ENCODE measurements at regions of chr17 and their contacts with region 1.

Region 1: DNA sequence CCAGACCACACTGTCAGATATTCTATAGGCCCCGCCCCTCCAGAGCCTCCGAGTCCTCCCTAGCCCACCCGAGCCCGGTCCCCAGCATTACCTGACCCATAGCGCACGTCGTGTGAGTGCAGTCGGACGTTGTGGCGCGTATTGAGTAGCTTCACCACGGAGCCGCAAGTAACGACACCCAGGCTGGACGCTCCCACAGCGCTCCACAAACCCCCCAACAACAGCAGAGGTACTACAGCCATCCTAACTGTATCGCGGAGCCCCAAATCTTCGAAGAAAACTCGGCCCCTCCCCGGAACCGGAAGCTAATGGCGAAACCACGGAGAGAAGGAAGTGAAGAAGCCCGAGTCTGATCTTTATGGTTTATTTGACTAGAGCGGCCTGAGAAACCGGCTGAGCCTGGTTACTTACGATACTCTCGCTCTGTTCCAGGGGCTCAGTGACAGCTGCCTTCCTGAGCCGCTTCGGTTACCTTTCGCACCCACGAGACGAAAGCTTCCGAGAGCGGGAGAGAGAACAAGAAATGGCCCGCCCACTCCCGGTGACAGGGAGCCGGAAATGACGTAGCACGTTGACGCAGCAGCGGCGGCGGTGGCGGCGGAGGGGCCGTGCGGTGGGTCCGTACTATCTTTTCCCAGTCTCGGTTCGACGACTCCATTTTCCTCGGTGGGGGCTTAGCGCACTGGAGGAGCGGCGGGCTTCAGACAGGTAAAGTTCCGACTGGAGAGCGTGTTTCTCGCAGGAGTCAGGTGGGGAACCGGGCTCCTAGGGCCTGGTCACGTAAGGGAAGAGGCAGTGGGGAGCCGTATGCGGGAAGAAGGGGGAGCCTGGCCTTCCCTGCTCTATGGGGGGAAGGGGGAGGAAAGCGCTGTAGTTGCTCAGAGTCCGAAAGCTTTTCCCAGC is at the starts of genes SDF2 and SUPT6H:
- DNase-seq: peak; percentile 91
- H3K4me3 Mint-ChIP-seq: peak within 1 kb of the TSS; percentile 99
- H3K27ac Mint-ChIP-seq: peak within 1 kb of the TSS; percentile 99
- H3K4me1 Mint-ChIP-seq: peaks cover 34% of the 10 kb centered on the region
- H3K27me3 Mint-ChIP-seq: no peaks in the 10 kb centered on the region
- total RNA-seq, gene SDF2: 40.3 and 49.2 TPM in 2 replicates
- total RNA-seq, gene SUPT6H: 97.5 and 102 TPM in 2 replicates

Region 2: GRCh38 chr17:28585851-28586250 is 76.0 kb before region 1 on chr17:
- intact Hi-C with region 1: no loop called
- DNase-seq: no peak
- H3K4me3 Mint-ChIP-seq: no peak overlapping the region
- H3K27ac Mint-ChIP-seq: no peak overlapping the region
- H3K4me1 Mint-ChIP-seq: peaks cover 1% of the 10 kb centered on the region
- H3K27me3 Mint-ChIP-seq: no peaks in the 10 kb centered on the region

Region 3: DNA sequence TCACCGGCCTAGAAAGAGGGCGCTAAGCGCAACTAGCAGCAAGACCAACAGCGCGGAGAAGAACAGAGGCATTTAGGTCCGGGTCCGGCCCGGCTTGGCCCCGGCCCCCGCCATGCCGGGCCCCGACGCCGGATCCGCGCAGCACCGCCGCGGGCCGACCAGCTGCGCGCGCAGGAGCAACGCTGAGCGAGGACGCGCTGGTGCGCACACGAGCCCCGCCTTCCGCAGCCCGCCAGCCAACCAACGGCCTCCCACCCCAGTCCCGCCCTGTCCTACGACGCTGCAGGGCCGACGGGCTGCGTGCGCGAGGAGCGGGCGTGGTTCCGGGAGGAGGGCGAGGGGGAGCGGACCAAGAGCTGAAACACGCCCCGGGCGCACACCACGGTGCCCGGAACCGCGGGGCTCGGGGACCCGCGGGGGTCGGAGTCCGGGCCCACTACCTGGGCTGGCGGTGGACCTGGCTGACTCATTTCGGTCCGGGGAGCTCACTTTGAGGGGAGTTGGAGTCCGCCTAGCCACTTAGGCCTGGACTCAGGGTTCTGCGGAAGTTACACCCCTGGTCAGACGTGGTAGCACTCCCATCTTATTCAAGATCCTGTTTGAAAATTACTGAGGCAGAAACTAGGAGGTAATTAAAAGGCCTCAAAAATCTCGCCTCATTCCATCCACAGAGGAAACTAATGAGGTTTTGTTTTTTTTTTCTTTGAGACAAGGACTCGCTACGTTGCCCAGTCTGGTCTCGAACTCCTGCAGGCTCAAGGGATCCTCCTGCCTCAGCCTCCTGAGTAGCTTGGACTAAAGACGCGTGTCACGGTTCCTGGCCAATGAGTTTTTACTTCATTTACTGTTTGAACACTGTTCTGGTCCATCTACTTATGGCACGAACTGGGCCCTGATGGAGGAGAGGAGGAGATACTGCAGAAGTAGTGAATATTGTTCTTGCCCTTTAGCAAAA is 16.6 kb before region 1 on chr17 and contains the start of gene BLTP2:
- intact Hi-C with region 1: loop called (anchors 1 kb)
- DNase-seq: peak; percentile 94
- H3K4me3 Mint-ChIP-seq: peak within 1 kb of the TSS; percentile 94
- H3K27ac Mint-ChIP-seq: peak within 1 kb of the TSS; percentile 86
- H3K4me1 Mint-ChIP-seq: peaks cover 35% of the 10 kb centered on the region
- H3K27me3 Mint-ChIP-seq: no peaks in the 10 kb centered on the region
- total RNA-seq, gene BLTP2: 196 and 213 TPM in 2 replicates

Region 4: DNA sequence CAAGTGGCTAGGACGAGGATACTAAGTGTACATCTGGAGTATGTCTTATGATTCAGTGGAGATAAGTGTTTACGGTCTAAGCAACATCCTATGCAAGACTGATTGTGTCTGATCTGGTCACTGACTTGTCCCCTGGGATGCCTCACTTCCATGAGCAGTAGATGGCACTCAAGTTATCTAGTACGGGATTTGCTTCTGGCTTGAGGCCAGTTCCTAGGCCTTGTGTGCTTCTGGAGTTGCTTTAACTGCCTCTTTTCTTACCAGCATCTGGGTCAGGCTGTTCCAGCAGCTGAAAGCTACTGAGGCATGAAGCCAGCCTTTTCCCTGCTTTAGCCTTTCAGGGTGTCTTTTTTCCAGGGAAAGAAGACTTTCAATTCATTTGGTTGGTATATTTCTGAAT is 23.1 kb after region 1 on chr17:
- intact Hi-C with region 1: no loop called
- DNase-seq: no peak
- H3K4me3 Mint-ChIP-seq: no peak overlapping the region
- H3K27ac Mint-ChIP-seq: no peak overlapping the region
- H3K4me1 Mint-ChIP-seq: no peaks in the 10 kb centered on the region
- H3K27me3 Mint-ChIP-seq: no peaks in the 10 kb centered on the region

Region 5: GRCh38 chr17:28710861-28711722 is 49.2 kb after region 1 on chr17:
- intact Hi-C with region 1: loop called (anchors 5 kb)
- DNase-seq: peak; percentile 92
- H3K4me3 Mint-ChIP-seq: peak overlapping the region; percentile 88
- H3K27ac Mint-ChIP-seq: peak overlapping the region; percentile 96
- H3K4me1 Mint-ChIP-seq: peaks cover 7% of the 10 kb centered on the region
- H3K27me3 Mint-ChIP-seq: peaks cover 4% of the 10 kb centered on the region

Region 6: DNA sequence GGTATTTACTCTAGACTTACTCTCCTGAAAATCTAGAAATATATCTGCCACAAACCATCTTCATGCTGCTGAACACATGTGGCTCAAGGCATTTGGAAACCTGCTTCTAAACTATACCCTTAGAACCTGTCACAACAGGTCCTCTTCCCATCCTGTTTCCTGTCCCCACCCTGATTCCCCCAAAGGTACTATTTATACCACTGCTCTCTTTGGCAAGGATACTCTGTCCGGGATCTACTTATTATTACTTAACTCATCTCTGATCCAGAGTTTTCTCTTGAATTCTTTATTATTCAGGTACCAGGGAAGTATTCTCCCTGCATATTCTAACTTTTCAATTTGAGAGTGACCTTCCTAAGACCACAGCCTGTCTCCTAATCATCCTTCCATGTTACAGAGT is 115.3 kb after region 1 on chr17:
- intact Hi-C with region 1: no loop called
- DNase-seq: no peak
- H3K4me3 Mint-ChIP-seq: no peak overlapping the region
- H3K27ac Mint-ChIP-seq: no peak overlapping the region
- H3K4me1 Mint-ChIP-seq: peaks cover 22% of the 10 kb centered on the region
- H3K27me3 Mint-ChIP-seq: no peaks in the 10 kb centered on the region

Measured in activated T-helper 2 cell treated with anti-CD3 and anti-CD28 coated beads, Interferon-gamma antibody, Interleukin-2, Interleukin-4, amounts not matched to agents 10 μg/mL and 5 μg/mL and 100 μg/mL, durations not matched to agents 14 hours and 24 hours and 36 hours (primary cell).